CD8-positive, alpha-beta T cell (primary cell): ENCODE measurements at regions of chr4 and their contacts with region 1.

Region 1: GRCh38 chr4:105471566-105472176 is 2.2 kb downstream of the PPA2 start:
- DNase-seq: peak; percentile 38 to 87 (median 70)
- ATAC-seq: peak; percentile 25
- H3K4me3 ChIP-seq: no peak overlapping the region
- H3K4me3 Mint-ChIP-seq: peak overlapping the region; percentile 56
- H3K27ac ChIP-seq: no peak overlapping the region
- H3K27ac Mint-ChIP-seq: peak overlapping the region; percentile 38
- H3K4me1 ChIP-seq: peaks cover 32% of the 10 kb centered on the region
- H3K4me1 Mint-ChIP-seq: peaks cover 58% of the 10 kb centered on the region
- H3K27me3 ChIP-seq: no peaks in the 10 kb centered on the region
- H3K27me3 Mint-ChIP-seq: no peaks in the 10 kb centered on the region
- CTCF ChIP-seq: peak; percentile 74

Region 2: DNA sequence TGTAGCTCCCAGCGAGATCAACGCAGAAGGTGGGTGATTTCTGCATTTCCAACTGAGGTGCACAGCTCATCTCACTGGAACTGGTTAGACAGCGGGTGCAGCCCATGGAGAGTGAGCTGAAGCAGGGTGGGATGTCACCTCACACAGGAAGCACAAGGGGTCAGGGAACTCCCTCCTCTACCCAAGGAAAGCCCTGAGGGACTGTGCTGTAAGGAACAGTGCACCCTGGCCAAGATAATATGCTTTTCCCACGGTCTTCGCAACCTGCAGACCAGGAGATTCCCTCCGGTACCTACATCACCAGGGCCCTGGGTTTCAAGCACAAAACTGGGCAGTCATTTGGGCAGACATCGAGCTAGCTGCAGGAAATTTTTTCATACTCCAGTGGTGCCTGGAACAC is 541.4 kb before region 1 on chr4:
- CTCF ChIA-PET with region 1: interaction called, 3 read pairs
- POLR2A ChIA-PET with region 1: interaction called, 6 read pairs
- intact Hi-C with region 1: loop called (anchors 1 to 5 kb)
- DNase-seq: peak in 2 of 9 experiments; percentile 3 to 27
- ATAC-seq: no peak
- H3K4me3 ChIP-seq: peak overlapping the region in 1 of 2 experiments; percentile 28
- H3K4me3 Mint-ChIP-seq: no peak overlapping the region
- H3K27ac ChIP-seq: peak overlapping the region in 1 of 2 experiments; percentile 33
- H3K27ac Mint-ChIP-seq: peak overlapping the region; percentile 79
- H3K4me1 ChIP-seq: peaks cover 25% of the 10 kb centered on the region
- H3K4me1 Mint-ChIP-seq: peaks cover 51% of the 10 kb centered on the region
- H3K27me3 ChIP-seq: no peaks in the 10 kb centered on the region
- H3K27me3 Mint-ChIP-seq: no peaks in the 10 kb centered on the region
- CTCF ChIP-seq: no peak

Region 3: GRCh38 chr4:105146276-105147015 is 325.2 kb before region 1 on chr4 and contains the start of gene TET2:
- CTCF ChIA-PET with region 1: interaction called, 26 read pairs
- POLR2A ChIA-PET with region 1: interaction called, 17 read pairs
- intact Hi-C with region 1: loop called (anchors 1 kb)
- DNase-seq: peak; percentile 67 to 91 (median 80)
- ATAC-seq: peak; percentile 83
- H3K4me3 ChIP-seq: peak within 1 kb of the TSS; percentile 82 to 100
- H3K4me3 Mint-ChIP-seq: peak within 1 kb of the TSS; percentile 98
- H3K27ac ChIP-seq: peak within 1 kb of the TSS; percentile 85 to 98
- H3K27ac Mint-ChIP-seq: peak within 1 kb of the TSS; percentile 99
- H3K4me1 ChIP-seq: peaks cover 15% of the 10 kb centered on the region
- H3K4me1 Mint-ChIP-seq: peaks cover 43% of the 10 kb centered on the region
- H3K27me3 ChIP-seq: no peaks in the 10 kb centered on the region
- H3K27me3 Mint-ChIP-seq: no peaks in the 10 kb centered on the region
- CTCF ChIP-seq: no peak
- total RNA-seq, gene TET2: 49.8 to 53.9 TPM

Region 4: DNA sequence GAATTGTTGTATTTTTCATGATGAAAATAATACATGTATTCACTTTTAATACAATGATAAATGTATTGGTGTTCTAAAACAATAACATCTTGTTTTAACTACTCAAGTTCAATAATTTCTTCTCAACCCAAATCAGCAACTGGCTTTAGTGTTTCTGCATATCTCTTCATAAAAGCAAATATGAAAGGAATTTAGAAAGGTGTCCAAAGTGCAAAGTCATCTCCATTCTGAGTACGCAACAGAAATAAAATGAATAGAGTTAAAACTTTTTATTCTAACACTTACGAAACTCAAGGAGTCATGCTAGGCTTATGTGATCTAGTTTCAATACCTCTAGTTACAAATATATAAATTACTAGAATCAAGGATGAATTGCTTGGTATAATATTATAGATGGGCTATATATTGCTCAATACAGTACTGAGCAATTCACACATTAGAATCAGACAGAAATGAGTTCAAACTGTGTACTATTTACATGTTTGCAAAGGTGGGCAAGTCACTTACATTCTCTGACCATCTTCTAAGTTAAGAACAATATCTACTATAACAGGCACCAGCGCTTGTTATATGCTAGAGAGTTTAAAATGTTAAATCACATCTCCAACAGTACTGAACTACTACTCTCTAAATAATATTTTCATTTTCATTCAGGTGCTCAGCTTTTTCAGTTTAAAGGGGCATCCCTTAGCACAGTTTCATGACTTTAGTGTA is 49.3 kb before region 1 on chr4:
- CTCF ChIA-PET with region 1: interaction called, 3 read pairs
- POLR2A ChIA-PET with region 1: no interaction called
- intact Hi-C with region 1: loop called in 1 of 2 experiments (anchors 5 kb)
- DNase-seq: no peak
- ATAC-seq: no peak
- H3K4me3 ChIP-seq: no peak overlapping the region
- H3K4me3 Mint-ChIP-seq: no peak overlapping the region
- H3K27ac ChIP-seq: no peak overlapping the region
- H3K27ac Mint-ChIP-seq: no peak overlapping the region
- H3K4me1 ChIP-seq: no peaks in the 10 kb centered on the region
- H3K4me1 Mint-ChIP-seq: peaks cover 7% of the 10 kb centered on the region
- H3K27me3 ChIP-seq: no peaks in the 10 kb centered on the region
- H3K27me3 Mint-ChIP-seq: no peaks in the 10 kb centered on the region
- CTCF ChIP-seq: no peak

Region 5: DNA sequence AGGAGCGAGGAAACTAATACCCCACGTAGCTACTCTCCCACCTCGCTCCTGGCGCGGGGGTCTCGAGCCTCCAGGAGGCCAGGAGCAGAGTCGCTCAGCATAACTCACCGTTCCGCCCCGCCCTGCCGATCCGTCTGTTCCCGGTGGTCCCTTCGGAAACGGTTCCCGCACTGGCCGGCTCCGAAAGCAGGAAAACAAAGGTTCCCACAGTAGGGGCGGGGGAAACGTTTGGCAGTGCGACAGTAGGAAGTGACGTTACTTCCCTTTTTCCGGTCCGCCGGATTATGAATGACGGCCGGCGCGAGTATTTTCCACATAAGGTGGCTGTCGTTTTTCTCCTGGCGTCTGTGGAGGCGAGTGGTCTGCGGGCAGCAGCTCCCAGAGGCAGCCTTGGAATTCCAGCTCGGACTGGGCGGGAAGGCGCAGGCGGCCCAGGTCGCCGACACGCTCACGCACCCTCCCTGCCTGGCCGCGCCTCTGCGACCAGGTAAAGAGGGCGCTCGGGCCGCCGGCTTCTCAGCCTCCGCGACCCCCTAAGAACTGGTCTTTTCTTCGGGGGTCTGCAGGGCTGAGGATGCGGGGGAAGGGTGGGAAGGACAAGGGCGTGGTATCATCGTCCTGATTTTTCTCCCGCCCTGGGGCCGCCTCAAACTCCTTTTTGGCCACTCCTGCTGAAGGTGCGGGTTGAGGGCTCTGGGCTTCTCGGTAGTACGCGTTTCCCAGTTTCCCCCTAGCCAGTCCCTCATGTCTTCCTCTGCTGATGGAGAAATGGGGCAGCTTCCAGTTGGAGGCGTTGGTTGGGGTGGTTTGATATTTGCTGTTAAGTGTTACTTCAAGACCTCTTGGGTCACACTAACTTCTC is 237.1 kb after region 1 on chr4 and contains the starts of genes GSTCD and INTS12:
- CTCF ChIA-PET with region 1: interaction called, 9 read pairs
- POLR2A ChIA-PET with region 1: interaction called, 6 read pairs
- intact Hi-C with region 1: loop called (anchors 1 to 5 kb)
- DNase-seq: peak; percentile 82 to 94 (median 88)
- ATAC-seq: peak; percentile 91
- H3K4me3 ChIP-seq: peak within 1 kb of the TSS; percentile 69 to 96
- H3K4me3 Mint-ChIP-seq: peak within 1 kb of the TSS; percentile 100
- H3K27ac ChIP-seq: peak within 1 kb of the TSS; percentile 68 to 79
- H3K27ac Mint-ChIP-seq: peak within 1 kb of the TSS; percentile 98
- H3K4me1 ChIP-seq: peaks cover 24% of the 10 kb centered on the region
- H3K4me1 Mint-ChIP-seq: peaks cover 36% of the 10 kb centered on the region
- H3K27me3 ChIP-seq: no peaks in the 10 kb centered on the region
- H3K27me3 Mint-ChIP-seq: no peaks in the 10 kb centered on the region
- CTCF ChIP-seq: no peak
- total RNA-seq, gene GSTCD: 2.9 to 5.8 TPM
- total RNA-seq, gene INTS12: 23.9 to 24.8 TPM